Heart right ventricle (tissue), 16 donors: ENCODE measurements at regions of chr18 and their contacts with region 1.

Region 1: DNA sequence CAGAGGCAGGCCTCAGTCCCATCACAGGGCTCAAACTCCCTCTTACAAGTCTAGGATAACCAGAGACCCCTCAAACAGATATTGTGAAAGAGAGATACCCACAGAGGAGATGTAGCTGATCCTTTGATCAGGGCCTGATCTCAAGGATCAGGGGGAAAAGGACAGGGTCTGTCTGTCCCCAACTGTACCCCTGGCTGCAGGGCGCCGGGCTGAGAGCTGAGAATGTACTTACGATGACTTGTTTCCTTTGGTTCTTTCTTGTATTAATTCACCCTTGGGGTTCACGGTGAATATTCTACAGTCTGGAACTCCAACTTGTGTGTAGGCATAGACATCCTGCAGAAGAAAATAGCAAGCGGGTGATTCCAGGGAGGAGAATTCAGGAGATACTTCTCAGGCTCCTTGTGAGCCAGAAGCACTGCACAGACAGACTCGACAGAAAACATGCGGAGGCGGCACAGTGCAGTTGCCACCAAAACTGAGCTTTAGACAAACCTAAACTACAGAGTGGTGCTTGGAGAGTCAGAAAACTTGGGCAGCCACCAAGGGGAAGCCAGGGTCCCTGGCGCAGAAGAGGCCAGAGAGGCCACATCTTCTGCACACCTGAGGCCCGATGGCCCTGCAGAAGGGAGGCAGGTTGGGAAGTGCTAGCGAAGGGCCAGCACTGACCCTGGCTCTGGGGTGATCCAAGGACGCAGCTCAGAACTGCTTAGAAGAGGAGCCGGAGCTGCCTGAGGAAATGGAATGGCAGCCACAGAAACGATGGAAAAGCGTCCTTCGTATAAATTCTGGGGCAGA is 73.9 kb downstream of the EMILIN2 start:
- DNase-seq: no peak
- ATAC-seq: no peak
- H3K4me3 ChIP-seq: no peak overlapping the region
- H3K27ac ChIP-seq: no peak overlapping the region
- H3K4me1 ChIP-seq: peaks cover 0 to 18% (median 4%) of the 10 kb centered on the region in 9 donors
- H3K27me3 ChIP-seq: no peaks in the 10 kb centered on the region
- CTCF ChIP-seq: no peak

Region 2: DNA sequence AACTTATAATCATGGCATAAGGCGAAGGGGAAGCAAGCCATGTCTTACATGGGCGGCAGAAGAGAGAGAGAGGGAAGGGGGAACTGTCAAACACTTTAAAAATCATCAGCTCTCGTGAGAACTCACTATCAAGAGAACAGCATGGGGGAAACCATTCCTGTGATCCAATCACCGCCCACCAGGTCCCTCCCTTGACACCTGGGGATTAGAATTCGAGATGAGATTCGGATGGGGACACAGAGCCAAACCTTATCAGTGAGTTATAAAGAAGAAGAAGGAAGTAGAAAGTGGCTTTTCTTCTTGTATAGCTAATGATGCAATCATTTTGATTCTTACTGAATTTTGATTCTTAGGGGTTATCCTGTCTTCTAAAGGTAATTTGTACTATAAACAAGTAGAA is 213.8 kb before region 1 on chr18:
- intact Hi-C with region 1: no loop called
- DNase-seq: no peak
- ATAC-seq: no peak
- H3K4me3 ChIP-seq: no peak overlapping the region
- H3K27ac ChIP-seq: no peak overlapping the region
- H3K4me1 ChIP-seq: no peaks in the 10 kb centered on the region
- H3K27me3 ChIP-seq: no peaks in the 10 kb centered on the region
- CTCF ChIP-seq: no peak

Region 3: GRCh38 chr18:3129053-3129864 is 208.5 kb after region 1 on chr18:
- intact Hi-C with region 1: loop called in 2 of 10 experiments (anchors 10 kb)
- DNase-seq: peak; percentile 78 to 82
- ATAC-seq: peak; percentile 76 to 93 (median 85)
- H3K4me3 ChIP-seq: no peak overlapping the region
- H3K27ac ChIP-seq: peak overlapping the region in 1 of 10 donors; percentile 2
- H3K4me1 ChIP-seq: peaks cover 0 to 17% (median 7%) of the 10 kb centered on the region in 9 donors
- H3K27me3 ChIP-seq: no peaks in the 10 kb centered on the region
- CTCF ChIP-seq: peak; percentile 57 to 91 (median 82)

Region 4: DNA sequence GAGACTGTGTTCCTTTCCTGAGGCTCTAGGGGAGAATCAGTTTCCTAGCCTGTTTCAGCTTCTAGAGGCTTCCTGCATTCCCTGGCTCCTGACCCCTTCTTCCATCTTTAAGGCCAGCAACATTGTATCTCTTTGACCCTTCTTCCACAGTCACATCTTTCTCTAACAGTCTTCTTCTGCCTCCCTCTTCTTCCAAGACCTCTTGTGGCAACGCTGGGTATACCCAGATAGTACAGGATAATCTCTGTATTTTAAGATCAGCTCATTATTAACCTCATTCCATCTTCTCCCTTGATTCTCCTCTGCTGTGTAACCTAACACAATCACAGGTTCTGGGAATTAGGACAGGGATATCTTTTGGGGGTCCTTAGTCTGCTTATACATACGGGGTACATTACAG is 318.0 kb after region 1 on chr18:
- intact Hi-C with region 1: loop called in 1 of 10 experiments (anchors 5 kb)
- DNase-seq: no peak
- ATAC-seq: no peak
- H3K4me3 ChIP-seq: no peak overlapping the region
- H3K27ac ChIP-seq: no peak overlapping the region
- H3K4me1 ChIP-seq: peaks cover 0 to 12% (median 0%) of the 10 kb centered on the region in 9 donors
- H3K27me3 ChIP-seq: no peaks in the 10 kb centered on the region
- CTCF ChIP-seq: no peak